ENCODE measurements at regions of chr2 and their contacts with region 1.

Region 1: GRCh38 chr2:36695746-36696415 is 626 bp upstream of the VIT start:
- DNase-seq: no peak
- H3K4me3 Mint-ChIP-seq: no peak overlapping the region
- H3K27ac Mint-ChIP-seq: no peak overlapping the region
- H3K4me1 Mint-ChIP-seq: peaks cover 3% of the 10 kb centered on the region
- H3K27me3 Mint-ChIP-seq: no peaks in the 10 kb centered on the region
- CTCF ChIP-seq: no peak

Region 2: DNA sequence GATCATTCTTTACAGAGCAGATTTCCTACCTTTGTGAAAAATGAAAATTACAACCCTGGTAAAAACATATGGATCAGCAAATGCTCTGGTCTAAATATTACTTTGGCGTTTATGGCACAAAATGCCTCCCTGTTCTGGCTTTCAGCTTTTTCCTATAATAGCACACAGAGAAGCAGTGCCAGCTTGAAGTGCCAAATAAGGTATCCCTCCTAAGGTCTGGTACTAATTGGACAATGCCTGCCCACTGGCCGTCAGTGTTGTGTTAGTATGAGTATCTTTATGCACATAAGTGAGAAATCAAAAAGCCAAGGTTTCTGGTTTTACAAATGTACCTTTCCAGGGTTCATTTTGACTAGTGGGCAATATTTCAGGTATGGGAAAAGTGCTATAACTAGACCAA is 1803.1 kb before region 1 on chr2:
- CTCF ChIA-PET with region 1: interaction called, 10 read pairs
- intact Hi-C with region 1: no loop called
- DNase-seq: no peak
- H3K4me3 Mint-ChIP-seq: no peak overlapping the region
- H3K27ac Mint-ChIP-seq: no peak overlapping the region
- H3K4me1 Mint-ChIP-seq: no peaks in the 10 kb centered on the region
- H3K27me3 Mint-ChIP-seq: no peaks in the 10 kb centered on the region
- CTCF ChIP-seq: no peak

Region 3: DNA sequence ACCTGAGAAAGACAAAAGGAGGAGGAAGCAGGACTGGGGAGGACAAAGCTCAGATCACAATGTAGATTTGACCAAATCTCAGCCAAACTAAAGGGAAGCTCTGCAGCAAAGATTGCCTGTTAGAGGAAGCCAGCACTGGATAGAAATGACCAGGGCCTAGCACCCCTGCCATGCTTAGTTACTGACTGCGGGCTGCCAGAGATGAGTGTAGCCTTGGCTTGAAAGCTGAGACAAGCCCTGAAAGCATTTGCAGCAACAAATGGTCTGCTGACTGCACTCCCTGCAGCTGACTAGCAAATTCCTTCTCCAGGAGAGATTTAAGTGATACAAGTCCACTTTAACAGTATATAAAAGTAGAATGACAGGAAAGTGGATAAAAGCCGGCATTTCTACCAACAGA is 481.2 kb before region 1 on chr2:
- CTCF ChIA-PET with region 1: interaction called, 11 read pairs
- intact Hi-C with region 1: no loop called
- DNase-seq: no peak
- H3K4me3 Mint-ChIP-seq: no peak overlapping the region
- H3K27ac Mint-ChIP-seq: no peak overlapping the region
- H3K4me1 Mint-ChIP-seq: no peaks in the 10 kb centered on the region
- H3K27me3 Mint-ChIP-seq: no peaks in the 10 kb centered on the region
- CTCF ChIP-seq: no peak

Region 4: DNA sequence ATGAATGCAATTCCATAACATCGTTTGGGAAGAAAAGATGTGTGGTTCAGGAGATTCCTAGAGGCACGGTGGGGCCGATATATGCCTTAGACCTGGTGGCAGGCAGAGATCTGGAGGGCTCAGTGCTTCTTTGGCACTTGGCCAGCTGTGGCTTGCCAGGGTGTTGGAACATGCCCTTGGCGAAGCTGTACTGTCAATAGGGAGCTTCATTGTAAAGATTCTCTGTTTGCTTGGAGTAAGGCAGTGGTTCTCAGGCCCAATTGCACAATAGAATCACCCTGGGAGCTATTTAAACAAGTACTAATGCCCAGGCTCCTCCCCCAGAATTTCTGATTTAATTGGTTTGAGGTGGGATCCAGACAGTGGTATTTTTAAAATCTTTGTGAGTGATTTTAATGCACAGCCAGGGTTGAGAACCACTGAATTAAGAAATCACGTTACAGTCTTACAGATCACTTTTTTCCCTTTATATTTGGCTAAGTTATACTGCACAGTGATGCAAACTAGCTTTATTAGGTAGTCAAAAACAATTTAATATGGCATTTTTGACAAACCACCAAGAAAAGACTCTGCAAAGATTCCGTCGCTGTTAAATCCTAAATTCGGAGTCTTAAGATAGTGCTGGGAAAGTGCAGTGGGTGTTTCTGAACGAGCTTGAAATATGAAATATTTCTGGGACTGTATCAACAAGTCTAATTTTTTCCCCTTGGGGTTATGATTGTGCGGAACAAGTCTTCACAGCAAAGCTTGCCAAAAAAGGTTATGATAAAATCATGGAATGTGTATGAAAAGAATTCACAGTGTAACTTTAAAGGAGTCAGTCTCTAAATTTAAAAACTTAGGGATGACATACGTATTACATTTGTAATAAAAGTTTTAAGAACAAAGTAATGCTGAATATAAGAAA is 262.3 kb before region 1 on chr2:
- CTCF ChIA-PET with region 1: no interaction called
- intact Hi-C with region 1: no loop called
- DNase-seq: no peak
- H3K4me3 Mint-ChIP-seq: no peak overlapping the region
- H3K27ac Mint-ChIP-seq: no peak overlapping the region
- H3K4me1 Mint-ChIP-seq: peaks cover 18% of the 10 kb centered on the region
- H3K27me3 Mint-ChIP-seq: no peaks in the 10 kb centered on the region
- CTCF ChIP-seq: no peak

Region 5: DNA sequence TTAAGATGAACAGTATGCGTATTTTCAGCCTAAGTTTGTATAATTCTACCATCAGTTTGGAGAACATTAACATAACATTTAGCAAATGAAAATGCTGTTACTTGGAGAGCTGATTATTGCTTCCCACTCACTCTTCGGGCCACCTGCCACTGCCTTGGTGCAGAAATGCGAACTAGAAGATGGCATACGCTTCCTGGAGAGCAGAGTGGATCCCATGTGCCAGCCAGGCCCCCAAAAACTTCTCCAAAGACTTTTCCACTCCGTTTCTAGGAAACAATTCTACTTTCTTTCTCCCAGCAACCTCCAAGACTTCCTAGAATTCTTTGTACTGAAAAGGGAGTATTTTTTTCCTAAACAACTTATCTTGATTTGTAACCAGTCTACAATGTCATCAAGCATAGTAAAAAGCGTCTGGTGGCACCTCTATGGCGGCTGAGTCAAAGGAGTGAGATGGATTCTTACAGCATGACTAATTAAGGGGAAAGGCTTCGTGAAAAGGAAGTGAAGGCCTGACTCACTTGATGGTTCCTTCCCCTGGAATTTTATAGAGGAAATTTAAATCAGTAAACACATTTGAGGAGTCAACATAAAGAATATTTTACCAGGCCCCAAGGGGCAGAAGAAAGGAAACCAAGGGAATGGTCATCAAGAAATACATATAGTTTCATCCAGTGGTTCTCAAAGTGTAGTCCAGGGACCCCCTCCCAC is 134.5 kb before region 1 on chr2:
- CTCF ChIA-PET with region 1: no interaction called
- intact Hi-C with region 1: no loop called
- DNase-seq: peak; percentile 64
- H3K4me3 Mint-ChIP-seq: peak overlapping the region; percentile 43
- H3K27ac Mint-ChIP-seq: peak overlapping the region; percentile 98
- H3K4me1 Mint-ChIP-seq: peaks cover 38% of the 10 kb centered on the region
- H3K27me3 Mint-ChIP-seq: no peaks in the 10 kb centered on the region
- CTCF ChIP-seq: no peak

Region 6: DNA sequence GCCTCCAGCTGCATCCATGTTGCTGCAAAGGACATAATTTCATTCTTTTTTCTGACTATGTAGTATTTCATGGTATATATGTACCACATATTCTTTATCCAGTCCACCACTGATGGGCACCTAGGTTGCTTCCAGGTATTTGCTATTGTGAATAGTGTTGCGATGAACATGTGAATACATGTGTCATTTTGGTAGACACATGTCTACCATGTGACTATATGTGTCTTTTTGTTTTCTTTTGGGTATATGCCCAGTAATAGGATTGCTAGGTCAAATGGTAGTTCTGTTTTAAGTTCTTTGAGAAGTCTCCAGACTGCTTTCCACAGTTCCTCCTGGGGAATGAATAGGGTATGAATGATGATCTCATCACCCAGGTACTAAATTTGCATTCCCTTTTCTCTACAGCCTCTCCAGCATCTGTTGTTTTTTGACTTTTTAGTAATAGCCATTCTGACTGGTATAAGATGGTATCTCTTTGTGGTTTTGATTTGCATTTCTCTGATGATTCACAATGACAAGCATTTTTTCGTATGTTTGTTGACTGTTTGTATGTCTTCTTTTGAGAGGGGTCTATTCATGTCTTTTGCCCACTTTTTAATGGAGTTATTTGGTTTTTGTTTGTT is 62.3 kb before region 1 on chr2:
- CTCF ChIA-PET with region 1: no interaction called
- intact Hi-C with region 1: no loop called
- DNase-seq: no peak
- H3K4me3 Mint-ChIP-seq: no peak overlapping the region
- H3K27ac Mint-ChIP-seq: no peak overlapping the region
- H3K4me1 Mint-ChIP-seq: peaks cover 5% of the 10 kb centered on the region
- H3K27me3 Mint-ChIP-seq: no peaks in the 10 kb centered on the region
- CTCF ChIP-seq: no peak

Region 7: DNA sequence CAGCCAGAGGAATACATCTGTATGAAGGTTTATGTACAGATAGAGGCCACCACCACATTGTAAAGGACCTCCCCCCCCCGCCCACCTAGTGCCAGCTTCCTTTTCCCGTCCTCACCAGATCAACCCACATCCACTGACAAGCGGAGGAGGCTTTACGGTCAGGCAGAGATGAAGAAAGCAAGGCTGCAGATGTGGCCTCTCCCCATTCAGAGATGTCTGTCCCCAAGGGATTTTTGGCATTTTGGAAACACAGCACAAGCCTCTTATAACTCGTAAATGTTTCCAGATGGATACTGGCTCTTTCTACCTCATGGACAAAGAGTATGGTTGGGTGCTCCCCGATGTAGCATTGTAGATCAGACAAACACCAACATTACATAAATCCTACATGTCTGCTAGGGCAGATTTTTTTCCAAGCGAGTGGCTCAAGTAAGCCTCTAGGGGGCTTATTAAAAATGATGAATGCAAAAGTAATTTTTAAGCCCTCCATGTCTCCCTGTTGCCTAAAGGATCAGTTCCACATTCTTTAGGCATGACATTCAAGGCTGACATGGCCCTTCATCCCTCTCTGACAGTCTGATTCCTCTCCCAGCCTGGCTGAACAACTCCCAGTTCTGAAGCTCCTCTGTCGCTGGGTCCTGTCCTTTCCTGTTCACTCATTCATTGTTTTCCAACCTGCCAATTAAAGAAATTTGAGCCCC is 12.3 kb after region 1 on chr2:
- CTCF ChIA-PET with region 1: no interaction called
- intact Hi-C with region 1: no loop called
- DNase-seq: no peak
- H3K4me3 Mint-ChIP-seq: no peak overlapping the region
- H3K27ac Mint-ChIP-seq: no peak overlapping the region
- H3K4me1 Mint-ChIP-seq: peaks cover 37% of the 10 kb centered on the region
- H3K27me3 Mint-ChIP-seq: no peaks in the 10 kb centered on the region
- CTCF ChIP-seq: no peak